ENCODE measurements at regions of chr4 and their contacts with region 1.

Region 1: GRCh38 chr4:75673027-75673958 is at the start of gene G3BP2:
- DNase-seq: peak; percentile 98
- ATAC-seq: peak; percentile 98
- H3K4me3 ChIP-seq: peak within 1 kb of the TSS; percentile 93
- H3K27ac ChIP-seq: peak within 1 kb of the TSS; percentile 83
- H3K4me1 ChIP-seq: peaks cover 4% of the 10 kb centered on the region
- H3K27me3 ChIP-seq: no peaks in the 10 kb centered on the region
- CTCF ChIP-seq: no peak
- POLR2A ChIP-seq: peak; percentile 78
- RAD21 ChIP-seq: no peak
- total RNA-seq, gene G3BP2: 183 and 306 TPM in 2 replicates

Region 2: GRCh38 chr4:75710246-75710645 is 37.0 kb after region 1 on chr4:
- CTCF ChIA-PET with region 1: no interaction called
- POLR2A ChIA-PET with region 1: no interaction called
- dilution Hi-C with region 1: no loop called
- in situ Hi-C with region 1: loop called (anchors 5 kb)
- intact Hi-C with region 1: no loop called
- DNase-seq: no peak
- ATAC-seq: no peak
- H3K4me3 ChIP-seq: no peak overlapping the region
- H3K27ac ChIP-seq: no peak overlapping the region
- H3K4me1 ChIP-seq: peaks cover 7% of the 10 kb centered on the region
- H3K27me3 ChIP-seq: no peaks in the 10 kb centered on the region
- CTCF ChIP-seq: no peak
- POLR2A ChIP-seq: no peak
- RAD21 ChIP-seq: no peak

Region 3: DNA sequence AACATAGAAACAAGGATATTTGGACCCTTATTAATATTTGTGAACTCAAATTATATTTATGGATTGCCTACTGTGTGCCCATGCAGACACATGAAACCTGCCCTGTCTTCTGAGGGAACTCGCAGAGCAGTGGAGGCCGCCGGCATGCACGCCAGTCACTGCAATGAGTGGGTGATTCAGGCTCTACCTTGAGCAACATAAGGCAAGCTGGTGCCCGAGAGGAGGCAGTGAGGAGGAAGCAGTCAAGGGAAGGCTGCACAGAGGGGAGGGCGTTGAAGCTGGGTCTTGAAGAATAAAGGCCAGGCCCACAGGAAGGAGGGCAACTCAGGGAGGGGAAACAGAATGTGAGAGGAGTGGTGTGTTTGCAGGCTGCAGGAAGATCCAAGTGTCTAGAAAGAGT is 176.2 kb after region 1 on chr4:
- CTCF ChIA-PET with region 1: no interaction called
- POLR2A ChIA-PET with region 1: no interaction called
- dilution Hi-C with region 1: no loop called
- in situ Hi-C with region 1: no loop called
- intact Hi-C with region 1: loop called (anchors 5 kb)
- DNase-seq: no peak
- ATAC-seq: no peak
- H3K4me3 ChIP-seq: no peak overlapping the region
- H3K27ac ChIP-seq: no peak overlapping the region
- H3K4me1 ChIP-seq: peaks cover 10% of the 10 kb centered on the region
- H3K27me3 ChIP-seq: peaks cover 7% of the 10 kb centered on the region
- CTCF ChIP-seq: no peak
- POLR2A ChIP-seq: no peak
- RAD21 ChIP-seq: no peak